ENCODE measurements at regions of chr17 and their contacts with region 1.

Region 1: DNA sequence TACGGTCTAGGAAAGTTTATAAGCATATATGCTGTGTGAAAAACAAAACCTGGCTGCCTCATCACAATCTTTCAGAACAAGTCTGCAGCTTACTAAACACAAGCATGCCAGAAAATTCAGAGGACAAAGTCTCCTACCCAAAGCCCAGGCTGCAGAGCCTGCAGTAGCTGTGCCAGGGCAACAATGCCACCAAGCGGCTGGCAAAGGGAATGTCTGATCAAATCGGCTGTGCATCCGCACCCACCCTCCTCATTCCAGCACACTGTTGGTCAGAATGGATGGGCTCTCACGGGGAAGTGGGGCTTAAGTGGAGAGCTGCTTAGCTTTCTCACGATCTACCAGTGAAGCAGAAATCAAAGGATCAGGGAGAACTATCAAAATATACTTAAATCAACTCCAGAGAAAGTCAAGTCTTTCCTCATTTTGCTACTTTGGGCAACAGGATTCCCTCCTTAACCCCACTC is 73.5 kb downstream of the CYTH1 start:
- DNase-seq: peak; percentile 62
- H3K4me3 ChIP-seq: no peak overlapping the region
- H3K27ac ChIP-seq: peak overlapping the region; percentile 31
- H3K4me1 ChIP-seq: peaks cover 27% of the 10 kb centered on the region
- H3K27me3 ChIP-seq: no peaks in the 10 kb centered on the region
- CTCF ChIP-seq: peak; percentile 92 to 96

Region 2: GRCh38 chr17:78448356-78448993 is 260.1 kb before region 1 on chr17:
- CTCF ChIA-PET with region 1: no interaction called
- dilution Hi-C with region 1: no loop called
- in situ Hi-C with region 1: no loop called
- intact Hi-C with region 1: loop called (anchors 5 kb)
- DNase-seq: no peak
- H3K4me3 ChIP-seq: no peak overlapping the region
- H3K27ac ChIP-seq: no peak overlapping the region
- H3K4me1 ChIP-seq: no peaks in the 10 kb centered on the region
- H3K27me3 ChIP-seq: no peaks in the 10 kb centered on the region
- CTCF ChIP-seq: peak; percentile 7 to 14

Region 3: DNA sequence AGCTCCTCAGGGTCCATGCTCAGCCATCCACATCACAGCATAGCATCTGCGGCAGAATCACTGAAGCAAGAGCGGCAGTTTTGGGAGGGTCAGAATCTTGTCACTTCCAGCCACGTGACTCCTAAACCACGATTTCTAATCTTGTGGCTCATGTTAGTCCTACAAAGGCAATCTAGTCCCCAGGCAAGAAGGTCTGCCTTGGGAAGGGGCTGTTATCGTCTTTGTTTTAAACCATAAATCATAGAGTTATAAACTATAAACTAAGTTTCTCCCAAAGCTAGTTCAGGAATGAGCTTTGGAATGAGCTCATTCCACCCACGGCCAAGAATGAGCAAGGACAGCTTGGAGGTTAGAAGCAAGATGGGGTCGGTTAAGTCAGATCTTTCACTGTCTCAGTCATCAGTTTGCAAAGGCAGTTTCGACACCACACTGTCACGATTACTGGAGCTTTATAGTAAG is 110.5 kb before region 1 on chr17:
- CTCF ChIA-PET with region 1: no interaction called
- dilution Hi-C with region 1: loop called (anchors 5 kb)
- in situ Hi-C with region 1: no loop called
- intact Hi-C with region 1: no loop called
- DNase-seq: peak; percentile 12
- H3K4me3 ChIP-seq: no peak overlapping the region
- H3K27ac ChIP-seq: no peak overlapping the region
- H3K4me1 ChIP-seq: no peaks in the 10 kb centered on the region
- H3K27me3 ChIP-seq: no peaks in the 10 kb centered on the region
- CTCF ChIP-seq: no peak

Region 4: GRCh38 chr17:78661093-78661770 is 47.3 kb before region 1 on chr17:
- CTCF ChIA-PET with region 1: interaction called, 17 read pairs
- dilution Hi-C with region 1: no loop called
- in situ Hi-C with region 1: no loop called
- intact Hi-C with region 1: loop called (anchors 1 kb)
- DNase-seq: peak; percentile 90
- H3K4me3 ChIP-seq: no peak overlapping the region
- H3K27ac ChIP-seq: peak overlapping the region; percentile 27
- H3K4me1 ChIP-seq: peaks cover 20% of the 10 kb centered on the region
- H3K27me3 ChIP-seq: no peaks in the 10 kb centered on the region
- CTCF ChIP-seq: no peak

Region 5: DNA sequence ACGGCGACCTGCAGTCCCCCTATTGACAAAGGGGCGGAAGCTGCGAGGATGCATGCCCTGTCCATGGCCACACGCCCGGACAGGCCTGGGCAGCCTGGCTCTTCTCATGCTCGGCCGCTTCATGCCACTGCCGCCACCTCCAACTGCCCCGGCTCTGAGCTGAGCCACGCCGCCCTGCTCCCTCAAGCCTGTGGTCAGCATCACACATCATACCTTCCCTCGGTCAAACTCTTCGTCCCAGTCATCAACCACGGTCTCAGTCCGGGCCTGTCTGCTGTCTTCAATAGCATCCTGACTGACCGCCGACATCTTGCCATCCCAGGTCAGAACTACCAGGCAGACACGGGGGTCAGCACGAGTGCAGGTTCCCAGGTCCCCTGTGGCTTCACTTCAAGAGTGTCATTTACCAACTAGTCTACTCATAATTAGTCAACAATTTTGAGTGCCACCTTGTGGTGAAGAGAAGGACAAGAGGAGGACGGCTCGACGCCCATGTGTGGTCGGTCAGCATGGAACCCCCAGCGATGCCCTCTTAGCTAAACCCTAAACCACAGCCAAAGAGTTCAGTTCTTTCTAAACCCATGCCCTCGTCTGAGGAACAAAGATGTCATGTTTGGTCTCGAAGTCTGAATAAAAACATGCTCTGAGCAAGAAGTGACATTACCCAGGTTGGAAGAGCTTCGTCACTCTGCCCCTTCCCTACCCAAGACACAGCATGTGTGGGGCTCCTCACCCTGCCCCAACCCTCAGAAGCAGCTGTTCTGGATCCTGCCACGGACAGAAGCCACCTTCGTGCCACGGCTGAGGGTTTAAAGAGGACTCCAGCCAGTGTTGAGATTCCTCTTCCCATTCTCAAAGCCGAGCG is 90.4 kb after region 1 on chr17:
- CTCF ChIA-PET with region 1: interaction called, 3 read pairs
- dilution Hi-C with region 1: loop called (anchors 5 kb)
- in situ Hi-C with region 1: no loop called
- intact Hi-C with region 1: no loop called
- DNase-seq: peak; percentile 37
- H3K4me3 ChIP-seq: no peak overlapping the region
- H3K27ac ChIP-seq: no peak overlapping the region
- H3K4me1 ChIP-seq: peaks cover 41% of the 10 kb centered on the region
- H3K27me3 ChIP-seq: no peaks in the 10 kb centered on the region
- CTCF ChIP-seq: peak; percentile 12 to 48